ENCODE measurements at regions of chr9 and their contacts with region 1.

Region 1: GRCh38 chr9:83662933-83663332 is 40.0 kb downstream of the IDNK start:
- DNase-seq: no peak
- H3K4me3 Mint-ChIP-seq: no peak overlapping the region
- H3K27ac Mint-ChIP-seq: no peak overlapping the region
- H3K4me1 Mint-ChIP-seq: no peaks in the 10 kb centered on the region
- H3K27me3 Mint-ChIP-seq: no peaks in the 10 kb centered on the region
- CTCF ChIP-seq: no peak

Region 2: DNA sequence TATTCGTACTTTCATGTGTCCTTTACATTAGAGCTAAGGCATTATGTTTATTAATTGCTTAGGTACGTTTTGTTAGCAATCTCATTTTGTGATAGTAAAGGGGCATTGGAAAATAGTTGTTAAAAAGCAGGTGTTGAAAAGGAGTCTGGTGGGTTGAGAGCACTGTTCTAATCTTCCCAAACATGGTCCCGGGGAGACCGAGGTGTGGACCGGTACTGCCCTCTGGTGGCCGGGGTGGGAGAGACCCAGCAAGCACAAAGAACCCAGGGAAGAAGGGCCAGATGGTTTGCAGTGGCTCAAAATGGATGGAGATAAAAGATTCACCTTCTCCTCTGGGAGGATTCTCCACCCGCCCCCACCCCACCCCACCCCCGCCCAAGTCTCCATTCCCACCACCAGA is 13.9 kb before region 1 on chr9:
- CTCF ChIA-PET with region 1: interaction called, 11 read pairs
- POLR2A ChIA-PET with region 1: interaction called, 3 read pairs
- intact Hi-C with region 1: no loop called
- DNase-seq: peak; percentile 58
- H3K4me3 Mint-ChIP-seq: no peak overlapping the region
- H3K27ac Mint-ChIP-seq: no peak overlapping the region
- H3K4me1 Mint-ChIP-seq: no peaks in the 10 kb centered on the region
- H3K27me3 Mint-ChIP-seq: no peaks in the 10 kb centered on the region
- CTCF ChIP-seq: peak; percentile 62